Kidney (tissue), 22 donors: ENCODE measurements at regions of chr4 and their contacts with region 1.

Region 1: DNA sequence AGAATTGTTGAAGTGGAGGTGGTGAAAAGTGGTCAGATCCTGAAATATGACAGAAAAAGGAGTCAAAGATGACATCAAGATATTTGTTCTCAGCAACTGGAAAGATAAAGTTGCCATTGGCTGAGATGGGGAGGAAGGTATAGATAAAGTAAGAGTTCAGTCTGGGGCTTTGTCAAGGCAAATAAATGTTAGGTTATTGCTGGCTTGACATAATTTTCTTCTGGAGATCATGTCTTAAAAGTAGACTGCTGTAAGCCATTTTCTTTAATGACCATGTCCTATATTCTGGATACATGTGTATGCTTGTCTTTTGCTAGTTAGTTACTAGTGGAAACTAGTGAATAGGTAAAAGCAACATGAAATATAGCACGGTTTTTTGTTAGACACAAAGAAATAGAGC is 5.6 kb downstream of the USP53 start:
- DNase-seq: no peak
- H3K4me3 ChIP-seq: no peak overlapping the region
- H3K27ac ChIP-seq: no peak overlapping the region
- H3K4me1 ChIP-seq: no peaks in the 10 kb centered on the region
- H3K27me3 ChIP-seq: no peaks in the 10 kb centered on the region
- CTCF ChIP-seq: no peak

Region 2: GRCh38 chr4:119041951-119042560 is 176.0 kb before region 1 on chr4:
- intact Hi-C with region 1: loop called (anchors 5 kb)
- DNase-seq: peak in 4 of 5 donors; percentile 54 to 92 (median 80)
- H3K4me3 ChIP-seq: no peak overlapping the region
- H3K27ac ChIP-seq: peak overlapping the region in 1 of 2 donors; percentile 23
- H3K4me1 ChIP-seq: peaks cover 0 to 4% (median 3%) of the 10 kb centered on the region in 3 donors
- H3K27me3 ChIP-seq: no peaks in the 10 kb centered on the region
- CTCF ChIP-seq: peak; percentile 66

Region 3: DNA sequence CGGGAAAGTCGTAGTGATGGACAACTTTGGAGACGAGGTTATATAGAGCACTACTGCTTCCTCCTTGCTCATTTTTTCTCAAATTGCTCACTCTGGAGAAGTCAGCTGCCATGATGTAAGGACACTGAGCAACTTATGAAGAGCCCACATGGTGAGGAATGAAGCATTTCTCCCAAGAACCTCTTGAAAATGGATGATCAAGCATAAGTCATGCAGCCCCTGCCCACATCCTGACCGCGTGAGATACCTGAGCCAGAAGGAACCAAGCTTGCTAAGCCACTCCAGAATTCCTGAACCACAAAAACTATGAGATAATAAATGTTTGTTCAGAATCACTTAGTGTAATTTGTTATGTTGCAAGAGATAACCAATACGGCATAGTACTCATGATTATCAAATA is 367.7 kb after region 1 on chr4:
- intact Hi-C with region 1: no loop called
- DNase-seq: no peak
- H3K4me3 ChIP-seq: no peak overlapping the region
- H3K27ac ChIP-seq: no peak overlapping the region
- H3K4me1 ChIP-seq: no peaks in the 10 kb centered on the region
- H3K27me3 ChIP-seq: no peaks in the 10 kb centered on the region
- CTCF ChIP-seq: no peak